PC-9 (cell line): ENCODE measurements at regions of chr14 and their contacts with region 1.

Region 1: GRCh38 chr14:76647697-76648298 is 113.5 kb upstream of the VASH1 start:
- DNase-seq: peak; percentile 47 to 52
- H3K4me3 ChIP-seq: no peak overlapping the region
- H3K27ac ChIP-seq: no peak overlapping the region
- H3K4me1 ChIP-seq: no peaks in the 10 kb centered on the region
- H3K27me3 ChIP-seq: peaks cover 89% of the 10 kb centered on the region
- CTCF ChIP-seq: peak; percentile 95

Region 2: GRCh38 chr14:76050797-76051392 is 596.9 kb before region 1 on chr14:
- CTCF ChIA-PET with region 1: interaction called, 5 read pairs
- POLR2A ChIA-PET with region 1: no interaction called
- intact Hi-C with region 1: loop called (anchors 1 kb)
- DNase-seq: peak; percentile 59 to 64
- H3K4me3 ChIP-seq: no peak overlapping the region
- H3K27ac ChIP-seq: no peak overlapping the region
- H3K4me1 ChIP-seq: no peaks in the 10 kb centered on the region
- H3K27me3 ChIP-seq: no peaks in the 10 kb centered on the region
- CTCF ChIP-seq: peak; percentile 99

Region 3: GRCh38 chr14:76117789-76118484 is 529.9 kb before region 1 on chr14:
- CTCF ChIA-PET with region 1: no interaction called
- POLR2A ChIA-PET with region 1: no interaction called
- intact Hi-C with region 1: loop called (anchors 10 kb)
- DNase-seq: no peak
- H3K4me3 ChIP-seq: no peak overlapping the region
- H3K27ac ChIP-seq: no peak overlapping the region
- H3K4me1 ChIP-seq: no peaks in the 10 kb centered on the region
- H3K27me3 ChIP-seq: peaks cover 93% of the 10 kb centered on the region
- CTCF ChIP-seq: no peak

Region 4: DNA sequence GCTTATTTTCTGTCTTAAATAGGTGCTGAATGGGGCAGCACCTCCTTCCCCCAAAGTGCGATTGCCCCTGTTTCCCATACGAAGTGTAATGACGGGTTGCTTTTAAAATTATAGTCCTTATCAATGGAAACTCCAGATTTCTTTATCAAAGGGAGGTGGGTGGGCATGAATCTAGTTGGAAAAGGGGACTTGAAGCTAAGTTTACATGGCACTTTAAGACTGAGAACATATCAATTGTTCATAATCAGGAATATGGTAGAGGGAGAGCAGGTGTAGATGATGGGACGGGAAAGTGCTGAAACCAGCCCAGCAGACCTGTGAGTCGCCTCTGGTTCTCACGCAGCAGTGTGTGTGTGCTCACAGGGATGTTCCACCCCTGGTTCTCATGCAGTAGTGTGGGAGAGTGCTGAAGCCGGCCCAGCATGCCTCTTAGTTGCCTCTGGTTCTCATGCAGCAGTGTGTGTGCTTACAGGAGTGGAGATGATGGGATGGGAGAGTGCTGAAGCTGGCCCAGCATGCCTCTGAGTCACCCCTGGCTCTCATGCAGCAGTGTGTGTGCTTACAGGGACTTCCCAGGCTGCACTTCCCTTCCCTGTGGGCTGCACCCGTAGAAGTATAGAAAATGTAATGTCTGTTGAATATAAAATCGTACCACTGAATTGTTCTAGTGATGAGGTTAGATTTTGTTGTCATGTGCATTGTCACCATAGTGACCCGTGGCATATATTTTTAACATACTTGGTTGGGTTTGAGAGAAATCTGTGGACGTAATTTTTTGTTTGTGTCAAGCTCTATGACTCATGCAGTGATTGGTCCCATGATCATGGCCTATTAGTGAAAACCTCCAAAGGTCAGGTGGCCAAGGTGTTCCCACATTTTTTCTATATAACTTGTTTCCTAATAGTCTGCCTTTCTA is 444.5 kb before region 1 on chr14:
- CTCF ChIA-PET with region 1: no interaction called
- POLR2A ChIA-PET with region 1: no interaction called
- intact Hi-C with region 1: loop called (anchors 10 kb)
- DNase-seq: peak; percentile 59 to 66
- H3K4me3 ChIP-seq: no peak overlapping the region
- H3K27ac ChIP-seq: peak overlapping the region; percentile 49
- H3K4me1 ChIP-seq: peaks cover 27% of the 10 kb centered on the region
- H3K27me3 ChIP-seq: no peaks in the 10 kb centered on the region
- CTCF ChIP-seq: no peak